ENCODE measurements at regions of chr5 and their contacts with region 1.

Region 1: DNA sequence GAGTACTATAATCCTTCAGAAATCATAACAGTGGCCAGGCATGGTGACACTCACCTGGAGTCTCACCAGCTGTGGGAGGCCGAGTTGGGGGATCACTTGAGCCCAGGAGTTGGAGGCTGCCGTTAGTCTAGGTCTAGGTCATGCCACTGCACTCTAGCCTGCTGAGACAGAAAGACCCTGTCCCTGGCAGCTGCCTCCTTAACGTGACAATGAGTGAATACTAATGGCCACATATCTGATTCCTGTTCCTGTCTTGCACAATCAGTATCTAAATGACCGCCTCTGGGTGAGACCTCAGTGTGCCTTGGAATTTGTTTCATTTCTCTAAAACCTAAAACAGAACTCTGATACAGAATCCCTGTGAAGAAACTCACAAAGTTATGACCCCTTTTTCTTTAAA is 131.0 kb upstream of the DAB2 start:
- DNase-seq: no peak

Region 2: GRCh38 chr5:39224196-39224761 is 331.5 kb before region 1 on chr5:
- intact Hi-C with region 1: loop called (anchors 10 kb)
- DNase-seq: no peak

Region 3: DNA sequence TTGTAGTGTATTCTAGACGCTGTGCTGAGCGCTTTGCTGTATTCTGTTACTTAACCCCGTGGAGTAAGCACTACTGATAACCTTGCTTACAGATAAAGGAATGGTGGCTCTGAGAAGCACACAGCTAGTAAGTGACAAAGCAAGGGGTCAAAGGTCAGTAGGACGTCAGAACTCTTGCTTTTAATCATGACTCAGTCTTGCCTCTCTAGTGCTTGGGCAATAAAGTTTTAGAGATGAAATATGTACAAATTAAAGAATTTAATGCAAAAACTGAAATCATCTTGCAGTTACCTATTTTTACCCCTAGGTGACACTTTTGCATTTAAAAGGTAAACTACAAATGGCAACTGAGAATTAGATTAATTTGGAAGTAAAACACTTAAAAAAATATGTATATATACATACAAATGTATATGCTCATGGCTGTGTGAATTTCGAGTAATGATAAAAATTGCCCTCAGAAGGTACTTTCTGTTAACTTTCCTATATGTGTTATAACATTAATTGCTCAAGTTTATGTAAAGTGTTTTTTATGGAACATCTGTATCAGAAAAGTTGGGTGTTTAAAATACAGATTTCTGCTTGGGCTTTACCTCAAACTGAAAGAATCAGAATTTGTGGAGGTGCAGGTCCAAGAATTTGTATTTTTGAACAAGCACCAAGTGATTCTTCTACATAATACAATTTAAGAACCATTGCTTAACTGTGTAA is 44.1 kb after region 1 on chr5:
- intact Hi-C with region 1: no loop called
- DNase-seq: no peak

Measured in head of caudate nucleus (tissue), 42 donors.